ENCODE measurements at regions of chr6 and their contacts with region 1.

Region 1: DNA sequence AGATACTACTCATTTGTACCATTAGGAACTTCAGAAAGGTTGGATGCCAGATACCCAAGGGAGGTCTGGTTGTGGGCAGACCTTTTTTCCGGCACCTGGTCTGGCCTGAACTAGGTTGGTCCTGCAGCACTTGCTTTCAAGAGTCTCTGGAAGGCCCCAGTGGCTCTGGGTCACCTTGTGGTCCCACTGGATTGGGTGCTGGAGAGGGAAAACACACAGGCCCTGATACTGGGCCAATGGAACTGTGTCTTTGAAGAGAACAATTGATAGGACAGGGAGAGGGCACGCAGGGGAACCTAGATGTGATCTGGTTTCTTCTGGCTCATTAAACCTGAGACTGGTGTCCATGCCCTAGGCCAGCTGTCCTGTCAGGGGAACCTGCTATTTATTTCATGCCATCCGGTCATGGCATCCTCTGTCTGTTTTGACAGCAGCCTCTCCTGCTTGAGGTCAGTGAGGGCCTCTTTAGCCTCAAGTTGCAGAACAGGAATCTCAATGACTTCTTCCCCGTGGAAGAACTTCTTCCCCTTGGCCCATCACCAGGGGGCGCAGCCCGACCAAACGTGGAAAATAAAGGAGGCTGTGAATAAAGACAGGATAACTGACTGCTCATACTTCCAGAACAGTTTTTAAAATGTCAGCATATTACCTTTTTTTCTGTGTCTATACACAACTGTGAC is 25.0 kb downstream of the TAF8 start:
- DNase-seq: peak; percentile 60 to 96 (median 75)

Region 2: DNA sequence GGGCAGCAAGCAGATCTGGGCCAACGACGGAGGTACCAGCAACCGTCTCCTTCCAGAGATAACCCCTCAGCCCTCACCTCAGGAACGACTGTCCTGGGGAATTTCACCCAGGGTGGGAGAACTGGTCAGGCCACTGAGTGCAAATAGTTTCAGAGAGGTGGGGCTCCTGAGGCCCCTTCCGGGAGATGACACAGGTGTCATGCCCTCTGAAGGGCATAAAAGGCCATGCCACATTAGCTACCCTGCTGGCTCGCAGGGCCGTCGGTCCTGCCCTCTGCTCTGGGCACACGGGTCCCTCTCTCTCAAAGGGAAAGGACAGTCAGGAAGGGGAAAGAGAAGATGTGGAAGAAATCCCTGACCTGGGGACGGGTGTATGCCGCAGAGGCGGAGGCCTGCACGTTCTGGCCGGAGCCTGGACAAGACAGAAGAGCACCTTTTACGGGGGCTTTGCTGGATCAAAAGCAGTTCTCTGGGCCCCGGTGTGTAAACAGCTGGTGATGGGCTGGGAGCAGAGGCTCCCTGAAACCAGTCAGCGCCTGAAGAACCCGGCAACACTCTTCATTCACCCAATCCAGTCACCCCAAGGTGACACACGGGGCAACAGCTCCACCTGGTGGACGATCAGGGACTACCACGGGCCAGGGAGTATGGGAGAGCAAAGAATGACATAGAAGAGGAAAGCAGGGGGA is 31.4 kb before region 1 on chr6:
- intact Hi-C with region 1: no loop called
- DNase-seq: peak; percentile 75 to 98 (median 93)

Region 3: GRCh38 chr6:42168650-42169049 is 93.4 kb after region 1 on chr6:
- intact Hi-C with region 1: loop called (anchors 2 kb)
- DNase-seq: no peak

Measured in posterior cingulate gyrus (tissue), 11 donors.